Caco-2 (cell line): ENCODE measurements at regions of chr19 and their contacts with region 1.

Region 1: DNA sequence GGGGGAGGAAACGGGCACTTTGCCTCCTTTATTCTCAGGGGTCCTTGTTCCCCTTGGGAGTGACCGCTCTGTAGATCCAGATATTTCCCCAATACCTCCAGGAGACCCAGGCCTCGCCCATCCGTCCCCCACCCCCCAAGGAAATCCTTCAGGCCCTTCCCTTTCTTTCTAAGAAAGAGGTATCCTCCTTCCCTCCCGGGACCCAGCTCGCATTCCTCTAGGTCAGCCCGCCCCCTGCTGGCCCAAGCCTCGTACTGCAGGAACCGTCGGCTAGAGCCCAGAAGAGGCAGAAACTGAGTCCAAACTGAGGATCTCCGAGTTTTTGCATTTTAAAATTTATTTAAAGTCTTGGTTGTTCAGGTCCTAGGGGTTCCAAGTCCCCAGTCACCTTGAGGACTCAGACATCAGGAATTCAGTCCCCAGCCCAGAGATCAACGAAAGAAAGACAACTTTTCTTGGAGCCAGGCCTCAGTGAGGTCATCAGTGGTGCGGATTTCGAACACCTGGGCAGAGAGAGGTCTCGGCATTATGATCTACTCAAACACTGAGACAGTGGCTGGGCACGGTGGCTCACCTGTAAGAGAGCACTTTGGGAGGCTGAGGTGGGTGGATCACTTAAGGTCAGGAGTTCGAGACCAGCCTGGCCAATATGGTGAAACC is 7.5 kb upstream of the LRFN1 start:
- DNase-seq: peak; percentile 83 to 93
- H3K4me3 ChIP-seq: no peak overlapping the region
- H3K4me3 Mint-ChIP-seq: no peak overlapping the region
- H3K27ac Mint-ChIP-seq: peak overlapping the region; percentile 75
- H3K4me1 ChIP-seq: peaks cover 13% of the 10 kb centered on the region
- H3K4me1 Mint-ChIP-seq: peaks cover 8% of the 10 kb centered on the region
- H3K27me3 ChIP-seq: no peaks in the 10 kb centered on the region
- H3K27me3 Mint-ChIP-seq: no peaks in the 10 kb centered on the region
- CTCF ChIP-seq: peak; percentile 98

Region 2: DNA sequence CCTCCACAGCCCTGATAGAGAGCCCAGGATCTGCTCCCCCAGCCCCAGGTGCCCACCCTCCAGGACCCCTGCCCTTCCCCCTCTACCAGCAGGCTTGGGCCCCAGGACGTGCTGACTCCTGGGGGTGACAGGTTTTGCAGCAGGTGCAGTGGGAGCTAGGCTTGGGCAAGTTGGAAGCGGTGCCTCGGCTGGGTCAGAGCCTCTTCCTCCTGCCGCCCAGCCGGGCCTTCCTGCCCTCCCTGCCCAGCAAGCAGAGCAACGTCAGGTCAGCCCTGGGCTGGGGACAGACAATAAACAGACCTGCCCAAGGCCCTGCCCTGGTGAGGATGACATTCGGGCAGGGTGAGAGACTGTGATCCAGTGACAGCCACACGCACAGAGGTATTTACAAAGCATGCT is 140.6 kb before region 1 on chr19:
- CTCF ChIA-PET with region 1: interaction called, 3 read pairs
- POLR2A ChIA-PET with region 1: no interaction called
- intact Hi-C with region 1: loop called (anchors 1 kb)
- DNase-seq: no peak
- H3K4me3 ChIP-seq: no peak overlapping the region
- H3K4me3 Mint-ChIP-seq: no peak overlapping the region
- H3K27ac Mint-ChIP-seq: peak overlapping the region; percentile 8
- H3K4me1 ChIP-seq: peaks cover 8% of the 10 kb centered on the region; the same call in 1 of the 2 replicates
- H3K4me1 Mint-ChIP-seq: peaks cover 21% of the 10 kb centered on the region
- H3K27me3 ChIP-seq: no peaks in the 10 kb centered on the region
- H3K27me3 Mint-ChIP-seq: no peaks in the 10 kb centered on the region
- CTCF ChIP-seq: no peak

Region 3: GRCh38 chr19:39212375-39212742 is 115.8 kb before region 1 on chr19:
- CTCF ChIA-PET with region 1: interaction called, 5 read pairs
- POLR2A ChIA-PET with region 1: no interaction called
- intact Hi-C with region 1: loop called (anchors 1 kb)
- DNase-seq: peak; percentile 48 to 67
- H3K4me3 ChIP-seq: no peak overlapping the region
- H3K4me3 Mint-ChIP-seq: no peak overlapping the region
- H3K27ac Mint-ChIP-seq: no peak overlapping the region
- H3K4me1 ChIP-seq: no peaks in the 10 kb centered on the region; the same call in 1 of the 2 replicates
- H3K4me1 Mint-ChIP-seq: no peaks in the 10 kb centered on the region
- H3K27me3 ChIP-seq: no peaks in the 10 kb centered on the region
- H3K27me3 Mint-ChIP-seq: no peaks in the 10 kb centered on the region
- CTCF ChIP-seq: peak; percentile 39 to 46